Spleen (tissue), 13 donors: ENCODE measurements at regions of chr1 and their contacts with region 1.

Region 1: GRCh38 chr1:227437495-227438008 is 119.3 kb upstream of the CDC42BPA start:
- DNase-seq: no peak
- H3K4me3 ChIP-seq: peak overlapping the region in 3 of 8 donors; percentile 14 to 55 (median 31)
- H3K27ac ChIP-seq: no peak overlapping the region
- H3K4me1 ChIP-seq: peaks cover 0 to 6% (median 0%) of the 10 kb centered on the region in 6 donors
- H3K27me3 ChIP-seq: peaks cover 0 to 31% (median 0%) of the 10 kb centered on the region in 7 donors
- CTCF ChIP-seq: peak in 7 of 11 experiments; percentile 23 to 54 (median 41)
- POLR2A ChIP-seq: no peak

Region 2: DNA sequence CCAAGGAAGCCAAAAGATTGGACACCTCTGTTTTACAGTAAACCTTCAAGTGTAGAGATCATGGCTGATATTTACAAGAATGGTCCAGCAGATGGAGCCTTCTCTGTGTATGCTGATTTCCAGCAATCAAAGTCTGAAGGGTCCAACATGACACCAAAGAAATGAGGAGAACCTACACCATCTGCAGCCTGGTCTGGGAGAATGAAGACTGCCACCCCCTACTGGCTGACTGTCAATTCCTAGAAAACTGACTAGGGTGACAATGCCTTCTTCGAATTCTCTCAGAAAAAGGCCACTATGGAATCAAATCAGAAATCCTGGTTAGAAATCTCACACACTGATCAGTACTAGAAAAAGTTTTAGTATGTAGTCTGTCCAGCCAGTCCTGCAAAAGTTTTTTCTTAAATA is 202.6 kb before region 1 on chr1:
- intact Hi-C with region 1: loop called (anchors 10 kb)
- DNase-seq: no peak
- H3K4me3 ChIP-seq: no peak overlapping the region
- H3K27ac ChIP-seq: no peak overlapping the region
- H3K4me1 ChIP-seq: no peaks in the 10 kb centered on the region
- H3K27me3 ChIP-seq: no peaks in the 10 kb centered on the region
- CTCF ChIP-seq: peak in 4 of 11 experiments; percentile 23 to 33 (median 30)
- POLR2A ChIP-seq: no peak